ENCODE measurements at regions of chr7 and their contacts with region 1.

Region 1: DNA sequence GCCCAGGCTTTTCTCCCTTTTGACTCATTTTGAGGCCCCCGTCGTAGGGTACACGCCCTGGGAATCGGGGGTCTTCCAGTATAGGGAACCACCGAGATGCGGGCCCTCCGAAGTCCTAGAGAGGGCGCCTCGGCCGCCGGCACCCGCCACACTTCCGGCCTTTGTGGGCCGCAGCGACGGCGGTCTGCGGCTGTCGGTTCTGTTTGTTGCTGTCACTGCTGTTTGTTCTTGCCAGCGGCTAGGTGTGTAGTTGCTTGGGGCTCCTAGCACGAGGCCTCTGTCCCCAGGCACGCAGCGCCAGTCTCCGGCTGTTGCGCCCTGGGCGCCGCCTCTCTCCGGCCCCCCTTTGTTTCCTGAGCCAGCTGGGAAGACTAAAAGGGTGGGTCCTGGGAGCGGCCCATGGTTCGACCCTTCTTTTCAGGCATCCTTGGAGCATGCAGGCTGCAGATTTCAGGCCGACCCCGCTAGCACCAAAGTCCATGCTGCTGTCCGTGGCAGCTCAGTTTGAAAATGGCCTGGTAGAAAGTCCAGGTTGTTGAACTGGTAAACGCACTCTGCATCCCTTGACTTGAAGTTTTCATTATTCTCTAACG is 17.8 kb upstream of the ZKSCAN1 start:
- DNase-seq: no peak

Region 2: DNA sequence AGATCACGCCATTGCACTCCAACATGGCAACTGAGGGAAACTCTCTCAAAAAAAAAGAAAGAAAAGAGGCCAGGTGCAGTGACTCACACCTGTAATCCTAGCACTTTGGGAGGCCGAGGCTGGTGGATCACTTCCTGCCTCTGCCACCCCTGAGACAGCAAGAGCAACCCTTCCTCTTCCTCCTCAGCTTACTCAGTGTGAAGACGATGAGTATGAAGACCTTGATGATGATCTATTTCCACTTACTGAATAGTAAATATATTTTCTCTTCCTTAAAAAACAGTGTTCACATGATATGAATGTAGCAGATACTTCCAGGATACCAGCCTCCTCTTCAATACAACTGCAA is 15.7 kb after region 1 on chr7:
- intact Hi-C with region 1: loop called (anchors 2 kb)
- DNase-seq: no peak

Region 3: GRCh38 chr7:100081535-100082102 is 84.0 kb after region 1 on chr7 and contains the start of gene ZNF3:
- intact Hi-C with region 1: loop called (anchors 5 kb)
- DNase-seq: peak; percentile 99
- total RNA-seq, gene ZNF3: 14.5 TPM